ENCODE measurements at regions of chr3 and their contacts with region 1.

Region 1: GRCh38 chr3:98699136-98699535 is 64.0 kb upstream of the ST3GAL6 start:
- H3K4me3 ChIP-seq: no peak overlapping the region
- H3K27ac ChIP-seq: no peak overlapping the region
- H3K4me1 ChIP-seq: no peaks in the 10 kb centered on the region
- CTCF ChIP-seq: no peak

Region 2: GRCh38 chr3:98740324-98740723 is 41.2 kb after region 1 on chr3:
- CTCF ChIA-PET with region 1: no interaction called
- POLR2A ChIA-PET with region 1: interaction called, 10 read pairs
- H3K4me3 ChIP-seq: no peak overlapping the region
- H3K27ac ChIP-seq: no peak overlapping the region
- H3K4me1 ChIP-seq: no peaks in the 10 kb centered on the region
- CTCF ChIP-seq: no peak

Region 3: DNA sequence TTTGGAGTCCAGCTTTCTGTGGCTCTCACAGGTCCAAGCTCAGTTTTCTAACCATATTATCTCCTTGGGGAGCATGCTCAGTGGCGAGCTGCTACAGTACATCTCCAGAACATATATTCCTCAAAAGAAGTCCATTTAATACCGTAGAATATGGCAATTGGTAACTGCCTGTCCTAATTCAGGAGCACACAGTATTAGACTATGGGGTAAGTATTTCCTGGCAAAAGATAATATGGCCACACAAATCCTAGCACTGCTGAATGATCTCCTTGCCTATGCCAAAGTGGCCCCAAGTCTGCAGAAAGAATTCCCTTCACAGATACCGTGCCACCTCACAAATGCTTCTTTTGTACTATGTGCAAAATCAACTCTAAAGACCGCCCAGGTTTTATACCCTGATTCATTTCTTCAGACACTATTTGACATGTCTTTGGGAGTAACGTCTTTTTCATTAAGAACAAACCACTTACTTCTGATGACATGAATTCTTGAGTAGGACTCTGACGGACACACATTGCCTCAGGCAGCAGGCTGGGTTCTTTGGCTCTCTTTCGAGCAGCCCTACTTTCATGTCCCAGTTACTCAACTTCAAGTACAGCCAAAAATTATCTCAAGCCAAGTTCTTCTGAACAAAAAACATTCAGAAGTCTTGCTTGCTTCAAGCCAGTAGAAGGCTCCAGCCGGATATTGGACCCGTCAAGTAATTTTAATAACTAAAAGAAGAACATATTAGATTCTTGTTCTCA is 570.6 kb after region 1 on chr3:
- CTCF ChIA-PET with region 1: no interaction called
- POLR2A ChIA-PET with region 1: no interaction called
- H3K4me3 ChIP-seq: no peak overlapping the region
- H3K27ac ChIP-seq: no peak overlapping the region
- H3K4me1 ChIP-seq: no peaks in the 10 kb centered on the region
- CTCF ChIP-seq: no peak